Activated naive CD4-positive, alpha-beta T cell treated with anti-CD3 and anti-CD28 coated beads for 36 hours (primary cell): ENCODE measurements at regions of chr19 and their contacts with region 1.

Region 1: GRCh38 chr19:40836754-40837429 is 13.4 kb downstream of the CYP2A6 start:
- DNase-seq: no peak
- H3K4me3 Mint-ChIP-seq: no peak overlapping the region
- H3K27ac Mint-ChIP-seq: no peak overlapping the region
- H3K4me1 Mint-ChIP-seq: peaks cover 13% of the 10 kb centered on the region
- H3K27me3 Mint-ChIP-seq: no peaks in the 10 kb centered on the region

Region 2: DNA sequence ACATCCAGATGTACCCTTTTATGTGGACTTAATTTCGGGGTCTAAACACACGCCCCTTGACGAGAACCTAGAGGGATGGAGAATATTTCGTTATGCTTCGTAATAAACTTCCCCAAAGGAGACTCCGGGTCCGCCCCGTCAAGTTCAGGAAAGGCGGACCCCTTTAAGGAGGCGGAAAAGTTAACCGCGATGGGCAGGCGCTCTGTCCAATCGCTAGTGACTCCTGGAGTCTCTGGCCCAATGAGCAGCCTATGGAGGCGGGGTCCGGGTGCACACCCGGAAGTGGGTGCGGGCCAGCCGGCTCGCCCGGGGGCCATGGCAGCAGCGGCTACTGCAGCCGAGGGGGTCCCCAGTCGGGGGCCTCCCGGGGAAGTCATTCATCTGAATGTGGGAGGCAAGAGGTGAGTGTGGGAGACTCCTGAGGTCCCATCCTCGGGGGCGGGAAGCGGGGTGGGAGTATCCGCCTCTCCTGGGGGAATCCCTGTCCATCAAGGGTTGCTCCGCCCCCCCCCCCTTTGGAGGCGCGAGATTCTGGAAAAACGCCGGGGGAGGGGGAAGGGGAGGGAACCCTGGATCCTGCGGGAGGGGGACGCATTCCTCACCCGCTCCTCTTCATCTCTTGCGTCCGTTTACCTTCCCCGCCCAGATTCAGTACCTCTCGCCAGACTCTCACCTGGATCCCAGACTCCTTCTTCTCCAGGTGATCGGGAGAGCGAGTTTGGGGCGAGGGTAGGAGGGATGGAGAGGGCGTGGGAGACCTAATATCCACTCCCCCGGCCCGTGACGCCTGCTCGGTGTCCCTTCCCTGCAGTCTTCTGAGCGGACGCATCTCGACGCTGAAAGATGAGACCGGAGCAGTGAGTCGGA is 260.1 kb before region 1 on chr19 and contains the start of gene SHKBP1:
- CTCF ChIA-PET with region 1: no interaction called
- intact Hi-C with region 1: no loop called
- DNase-seq: peak; percentile 96
- H3K4me3 Mint-ChIP-seq: peak within 1 kb of the TSS; percentile 87
- H3K27ac Mint-ChIP-seq: peak within 1 kb of the TSS; percentile 65
- H3K4me1 Mint-ChIP-seq: peaks cover 16% of the 10 kb centered on the region
- H3K27me3 Mint-ChIP-seq: no peaks in the 10 kb centered on the region
- total RNA-seq, gene SHKBP1: 90.1 to 99.4 TPM

Region 3: GRCh38 chr19:40872209-40872608 is 35.3 kb after region 1 on chr19:
- CTCF ChIA-PET with region 1: no interaction called
- intact Hi-C with region 1: loop called (anchors 2 kb)
- DNase-seq: no peak
- H3K4me3 Mint-ChIP-seq: no peak overlapping the region
- H3K27ac Mint-ChIP-seq: no peak overlapping the region
- H3K4me1 Mint-ChIP-seq: peaks cover 7% of the 10 kb centered on the region
- H3K27me3 Mint-ChIP-seq: peaks cover 10% of the 10 kb centered on the region

Region 4: DNA sequence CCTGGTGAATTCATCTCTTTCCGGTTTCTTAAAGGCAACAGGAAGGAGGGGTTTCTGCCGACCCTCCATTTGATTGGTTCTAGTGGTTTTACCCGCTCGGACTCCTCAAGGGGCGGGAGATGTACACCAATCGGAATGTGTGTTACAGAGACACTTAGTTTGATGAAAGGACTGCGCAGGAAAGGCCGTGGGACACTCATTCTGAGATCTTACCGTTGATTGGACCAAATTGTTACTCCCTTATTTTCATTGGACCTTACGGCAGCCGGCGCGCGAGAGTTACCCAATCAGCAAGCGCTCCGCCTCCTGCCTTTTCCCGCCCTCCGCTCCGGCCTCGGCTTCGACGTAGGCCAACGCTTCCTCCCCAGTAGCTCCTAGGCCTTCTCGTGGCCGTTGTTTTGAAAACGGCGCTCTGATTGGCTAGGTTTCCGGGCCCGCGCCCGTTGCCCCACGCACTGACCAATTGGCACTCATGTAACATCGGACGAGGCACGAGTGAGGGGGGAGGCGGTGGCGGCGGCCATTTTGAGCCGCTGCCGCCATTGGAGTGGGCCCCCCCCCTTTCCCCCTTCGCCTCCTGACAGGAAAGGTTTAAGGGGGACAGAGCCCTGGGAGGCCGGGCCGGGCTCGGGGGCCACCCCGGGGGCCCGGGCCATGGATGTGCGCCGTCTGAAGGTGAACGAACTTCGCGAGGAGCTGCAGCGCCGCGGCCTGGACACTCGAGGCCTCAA is 427.1 kb after region 1 on chr19 and contains the start of gene HNRNPUL1:
- CTCF ChIA-PET with region 1: no interaction called
- intact Hi-C with region 1: no loop called
- DNase-seq: peak; percentile 99
- H3K4me3 Mint-ChIP-seq: peak within 1 kb of the TSS; percentile 91
- H3K27ac Mint-ChIP-seq: peak within 1 kb of the TSS; percentile 99
- H3K4me1 Mint-ChIP-seq: peaks cover 28% of the 10 kb centered on the region
- H3K27me3 Mint-ChIP-seq: no peaks in the 10 kb centered on the region
- total RNA-seq, gene HNRNPUL1: 298 to 301 TPM